ENCODE measurements at regions of chr6 and their contacts with region 1.

Region 1: GRCh38 chr6:42901536-42901957 is 14.3 kb upstream of the PTCRA start:
- DNase-seq: peak; percentile 63 to 64
- ATAC-seq: peak; percentile 91

Region 2: DNA sequence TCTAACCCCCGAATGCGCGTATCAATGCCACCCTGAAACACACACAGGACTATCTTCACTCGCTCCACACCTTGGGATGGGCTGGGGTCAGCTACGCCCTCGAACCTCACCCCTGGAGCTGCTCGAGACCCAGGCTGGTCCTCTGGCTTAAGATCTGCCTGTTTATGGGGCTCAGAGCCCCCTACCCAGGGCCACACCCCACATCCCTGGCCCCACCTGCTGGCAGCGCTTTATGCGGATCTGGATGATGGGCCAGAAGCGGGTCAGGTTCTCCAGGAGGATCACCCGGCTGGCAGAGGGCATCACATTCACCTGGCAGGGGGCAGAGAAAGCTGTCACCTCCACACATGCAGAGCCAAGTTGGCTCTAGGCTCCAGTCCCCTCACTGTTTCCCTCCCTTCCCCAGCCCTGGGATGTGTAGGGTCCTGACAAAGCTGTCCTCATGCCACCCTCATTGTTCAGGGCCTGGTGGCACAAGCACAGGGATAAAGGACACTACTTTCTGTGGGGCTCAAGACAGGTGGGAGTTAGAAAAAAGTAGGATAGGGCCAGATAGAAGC is 143.9 kb after region 1 on chr6:
- intact Hi-C with region 1: loop called in 1 of 2 experiments (anchors 10 kb)
- DNase-seq: no peak
- ATAC-seq: no peak

Region 3: DNA sequence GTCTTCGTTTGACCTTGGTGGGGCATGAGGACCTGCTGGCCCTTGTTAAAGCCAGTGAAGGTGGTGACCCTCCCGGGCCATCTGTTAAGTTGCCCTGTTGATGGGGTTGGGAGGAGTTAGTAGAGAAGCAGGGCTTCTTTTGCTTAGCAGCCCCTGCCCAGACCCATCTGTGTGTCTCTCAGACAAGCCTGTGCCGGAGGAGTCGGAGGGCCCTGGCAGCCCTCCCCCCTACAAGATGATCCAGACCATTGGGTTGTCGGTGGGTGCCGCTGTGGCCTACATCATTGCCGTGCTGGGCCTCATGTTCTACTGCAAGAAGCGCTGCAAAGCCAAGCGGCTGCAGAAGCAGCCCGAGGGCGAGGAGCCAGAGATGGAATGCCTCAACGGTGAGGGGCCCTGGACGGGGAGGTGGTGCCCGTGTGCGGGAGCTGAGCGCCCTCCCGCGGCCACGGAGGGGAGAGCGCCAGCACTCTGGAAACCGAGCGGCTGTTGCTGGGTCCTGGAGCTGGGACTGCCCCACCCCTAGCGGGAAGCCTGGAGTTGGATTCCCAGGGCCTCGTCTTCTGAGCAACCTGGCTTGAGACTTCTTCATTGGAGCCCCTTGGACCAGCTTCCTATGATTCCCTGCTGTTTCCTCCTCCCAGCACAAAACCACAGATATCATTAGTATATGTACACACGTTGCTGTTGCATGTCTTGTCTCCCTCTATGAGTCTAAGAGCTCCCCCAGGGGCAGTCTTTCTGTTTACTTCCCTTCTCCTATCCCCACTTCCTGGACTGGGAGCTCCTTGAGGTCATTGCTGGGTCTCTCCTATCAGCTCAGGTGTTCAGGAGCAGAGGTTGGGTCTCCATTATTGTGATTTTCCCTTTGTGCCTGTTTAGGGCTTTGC is 241.9 kb after region 1 on chr6:
- intact Hi-C with region 1: loop called (anchors 5 to 10 kb)
- DNase-seq: peak; percentile 78 to 83
- ATAC-seq: peak; percentile 99